Tibial artery (tissue), 4 donors: ENCODE measurements at regions of chr21 and their contacts with region 1.

Region 1: DNA sequence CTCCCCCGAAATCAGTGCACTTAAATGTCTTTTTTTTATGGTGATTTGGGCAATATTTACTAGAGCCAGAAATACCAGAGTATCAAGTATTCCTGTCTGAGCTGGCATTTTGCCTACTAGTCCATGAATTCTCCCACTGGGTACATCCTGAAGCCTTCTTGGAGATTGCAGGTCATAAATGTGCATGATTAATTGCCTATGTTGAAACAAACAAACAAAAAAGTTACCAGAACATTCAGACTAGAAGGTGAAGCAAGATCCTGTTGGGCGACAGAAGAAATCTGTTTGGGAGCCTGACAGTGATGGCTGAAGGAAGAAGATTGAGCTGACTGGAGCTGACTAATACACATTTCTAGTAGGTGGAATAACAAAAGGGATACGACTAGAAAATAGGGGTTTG is 127.4 kb upstream of the NRIP1 start:
- DNase-seq: no peak
- H3K4me3 ChIP-seq: no peak overlapping the region
- H3K27ac ChIP-seq: no peak overlapping the region
- H3K4me1 ChIP-seq: no peaks in the 10 kb centered on the region
- H3K27me3 ChIP-seq: no peaks in the 10 kb centered on the region
- CTCF ChIP-seq: no peak

Region 2: GRCh38 chr21:14989359-14989758 is 202.9 kb before region 1 on chr21:
- intact Hi-C with region 1: loop called (anchors 10 kb)
- DNase-seq: no peak
- H3K4me3 ChIP-seq: no peak overlapping the region
- H3K27ac ChIP-seq: no peak overlapping the region
- H3K4me1 ChIP-seq: peaks cover 0 to 4% (median 0%) of the 10 kb centered on the region in 4 donors
- H3K27me3 ChIP-seq: no peaks in the 10 kb centered on the region
- CTCF ChIP-seq: no peak